SK-N-SH (cell line): ENCODE measurements at regions of chr17 and their contacts with region 1.

Region 1: GRCh38 chr17:55348749-55349354 is 72.8 kb downstream of the MMD start:
- DNase-seq: peak; percentile 57
- H3K4me3 ChIP-seq: no peak overlapping the region
- H3K27ac ChIP-seq: no peak overlapping the region
- H3K4me1 ChIP-seq: peaks cover 0 to 2% of the 10 kb centered on the region in 2 experiments; a peak in 1 of 4 replicates
- H3K27me3 ChIP-seq: no peaks in the 10 kb centered on the region
- CTCF ChIP-seq: peak; percentile 98
- EP300 ChIP-seq: no peak
- RAD21 ChIP-seq: peak; percentile 91

Region 2: GRCh38 chr17:54985476-54985875 is 363.4 kb before region 1 on chr17:
- CTCF ChIA-PET with region 1: interaction called, 90 read pairs
- POLR2A ChIA-PET with region 1: no interaction called
- DNase-seq: no peak
- H3K4me3 ChIP-seq: no peak overlapping the region
- H3K27ac ChIP-seq: peak overlapping the region in 1 of 2 experiments; percentile 11; a peak in 1 of 4 replicates
- H3K4me1 ChIP-seq: peaks cover 0 to 15% of the 10 kb centered on the region in 2 experiments; a peak in 3 of 4 replicates
- H3K27me3 ChIP-seq: no peaks in the 10 kb centered on the region
- CTCF ChIP-seq: no peak
- EP300 ChIP-seq: no peak
- RAD21 ChIP-seq: no peak

Region 3: GRCh38 chr17:55228683-55229192 is 120.1 kb before region 1 on chr17:
- CTCF ChIA-PET with region 1: interaction called, 14 read pairs
- POLR2A ChIA-PET with region 1: no interaction called
- DNase-seq: no peak
- H3K4me3 ChIP-seq: no peak overlapping the region
- H3K27ac ChIP-seq: no peak overlapping the region
- H3K4me1 ChIP-seq: no peaks in the 10 kb centered on the region; a peak in 1 of 4 replicates
- H3K27me3 ChIP-seq: no peaks in the 10 kb centered on the region; the same call in 1 of the 2 replicates
- CTCF ChIP-seq: no peak
- EP300 ChIP-seq: no peak
- RAD21 ChIP-seq: no peak

Region 4: GRCh38 chr17:55295411-55296170 is 53.3 kb before region 1 on chr17:
- CTCF ChIA-PET with region 1: interaction called, 15 read pairs
- POLR2A ChIA-PET with region 1: no interaction called
- DNase-seq: peak; percentile 76
- H3K4me3 ChIP-seq: no peak overlapping the region
- H3K27ac ChIP-seq: no peak overlapping the region
- H3K4me1 ChIP-seq: peaks cover 0 to 2% of the 10 kb centered on the region in 2 experiments; a peak in 1 of 4 replicates
- H3K27me3 ChIP-seq: no peaks in the 10 kb centered on the region; the same call in 1 of the 2 replicates
- CTCF ChIP-seq: peak; percentile 96
- EP300 ChIP-seq: no peak
- RAD21 ChIP-seq: peak; percentile 95

Region 5: DNA sequence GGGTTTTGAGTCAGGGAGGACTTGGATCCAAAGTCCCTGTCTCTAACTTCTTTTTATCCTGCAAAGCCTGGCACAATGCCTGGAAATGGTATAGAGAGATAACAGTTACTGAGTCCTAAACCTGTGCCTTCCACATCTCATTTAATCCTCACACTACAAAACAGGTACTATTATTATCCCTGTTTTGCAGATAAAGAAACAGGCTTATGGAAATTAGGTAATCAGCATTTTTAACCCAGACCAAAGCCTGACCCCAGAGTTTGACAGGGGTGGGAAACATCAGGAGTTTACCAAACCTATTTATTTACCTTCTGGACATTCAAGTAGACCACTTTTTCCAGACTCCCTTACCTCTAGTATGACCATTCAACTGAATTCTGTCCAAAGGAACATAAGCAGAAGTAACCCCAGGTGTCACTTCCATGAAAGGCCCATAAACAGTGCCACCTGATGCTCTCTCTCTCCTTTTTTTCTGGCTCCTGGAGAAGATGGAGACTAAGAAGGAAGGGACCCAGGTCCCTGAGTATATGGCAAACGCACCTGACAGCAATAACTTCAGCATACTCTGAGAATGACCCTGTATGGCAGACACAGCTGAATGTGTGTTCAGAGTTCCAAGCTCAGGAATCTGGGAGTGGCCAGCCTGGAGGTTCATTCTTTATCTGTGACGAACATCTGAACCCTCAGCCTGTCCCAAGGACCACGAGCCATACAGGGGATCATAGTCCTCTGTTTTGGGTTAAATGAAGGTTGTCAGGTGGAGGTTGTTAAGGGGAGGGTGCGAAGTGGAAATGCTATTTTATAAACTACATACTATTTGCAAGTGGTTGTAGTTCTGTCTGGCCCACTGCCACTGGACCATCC is 21.4 kb before region 1 on chr17:
- CTCF ChIA-PET with region 1: interaction called, 11 read pairs
- POLR2A ChIA-PET with region 1: no interaction called
- DNase-seq: no peak
- H3K4me3 ChIP-seq: no peak overlapping the region
- H3K27ac ChIP-seq: no peak overlapping the region
- H3K4me1 ChIP-seq: no peaks in the 10 kb centered on the region
- H3K27me3 ChIP-seq: no peaks in the 10 kb centered on the region
- CTCF ChIP-seq: no peak
- EP300 ChIP-seq: no peak
- RAD21 ChIP-seq: no peak

Region 6: DNA sequence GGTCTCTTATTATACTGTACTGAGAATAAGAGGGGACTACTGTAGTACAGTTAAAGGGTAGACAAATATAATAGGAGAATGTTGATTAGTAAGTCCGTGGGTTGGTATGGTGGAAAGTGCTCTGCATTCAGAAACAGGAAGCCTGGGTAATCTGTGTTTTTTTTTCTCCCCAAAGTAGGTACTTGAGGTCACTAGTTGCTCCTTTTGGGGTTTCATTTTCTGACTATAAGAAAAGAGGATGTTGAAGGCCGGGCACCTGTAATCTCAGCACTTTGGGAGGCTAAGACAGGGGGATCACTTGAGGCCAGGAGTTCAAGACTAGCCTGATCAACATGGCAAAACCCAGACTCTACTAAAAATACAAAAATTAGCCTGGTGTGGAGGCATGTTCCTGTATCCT is 114.7 kb after region 1 on chr17:
- CTCF ChIA-PET with region 1: no interaction called
- POLR2A ChIA-PET with region 1: no interaction called
- DNase-seq: no peak
- H3K4me3 ChIP-seq: no peak overlapping the region
- H3K27ac ChIP-seq: no peak overlapping the region
- H3K4me1 ChIP-seq: peaks cover 0 to 3% of the 10 kb centered on the region in 2 experiments; a peak in 1 of 4 replicates
- H3K27me3 ChIP-seq: no peaks in the 10 kb centered on the region
- CTCF ChIP-seq: no peak
- EP300 ChIP-seq: no peak
- RAD21 ChIP-seq: no peak